CD8-positive, alpha-beta T cell (primary cell): ENCODE measurements at regions of chr19 and their contacts with region 1.

Region 1: DNA sequence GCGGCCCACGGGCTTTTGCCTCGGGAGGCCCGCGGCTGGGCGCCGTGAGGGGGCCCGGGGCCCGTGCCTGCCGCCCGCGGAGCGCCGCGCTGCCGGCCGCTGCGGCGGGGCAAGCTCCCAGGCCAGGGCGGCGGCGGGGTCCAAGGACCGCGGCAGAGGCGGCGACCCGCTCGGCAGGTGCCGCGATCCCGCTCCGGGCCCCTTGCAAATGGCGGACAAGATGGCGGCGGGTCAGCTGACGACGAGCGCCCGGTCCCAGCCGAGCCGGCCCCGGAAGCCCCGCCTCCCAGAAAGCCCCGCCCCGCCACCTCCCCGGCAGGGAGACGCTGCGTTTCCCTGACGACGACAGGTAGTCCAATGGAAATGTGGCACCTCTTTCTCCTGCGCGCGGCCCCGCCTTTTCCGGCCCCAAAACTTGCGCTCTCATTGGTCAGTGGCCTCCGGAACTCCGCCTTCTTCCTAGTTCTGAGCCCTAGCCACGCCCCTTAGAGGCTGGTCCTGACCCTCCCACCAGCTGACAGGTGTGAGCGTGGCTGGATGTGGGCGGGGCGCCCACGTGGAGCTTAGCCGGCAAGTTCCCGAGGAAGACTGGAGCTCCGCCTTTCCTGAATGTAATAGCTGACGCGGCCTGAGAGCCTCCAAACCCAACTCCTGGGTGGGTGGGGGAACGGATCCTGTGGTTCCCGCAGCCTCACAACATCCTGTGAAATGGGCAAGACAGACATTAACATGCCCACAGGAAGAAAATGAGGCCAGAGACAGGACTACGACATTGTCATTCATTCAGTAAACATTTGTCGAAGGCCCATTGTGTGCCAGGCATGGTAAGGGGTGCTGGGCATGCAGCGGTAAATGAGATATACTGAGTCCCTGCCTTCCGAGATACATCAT is at the start of gene AP3D1:
- DNase-seq: peak; percentile 100
- ATAC-seq: peak; percentile 91
- H3K4me3 ChIP-seq: peak within 1 kb of the TSS; percentile 60 to 87
- H3K4me3 Mint-ChIP-seq: peak within 1 kb of the TSS; percentile 85
- H3K27ac ChIP-seq: peak within 1 kb of the TSS; percentile 78 to 79
- H3K27ac Mint-ChIP-seq: peak within 1 kb of the TSS; percentile 90
- H3K4me1 ChIP-seq: peaks cover 36% of the 10 kb centered on the region
- H3K4me1 Mint-ChIP-seq: peaks cover 35% of the 10 kb centered on the region
- H3K27me3 ChIP-seq: no peaks in the 10 kb centered on the region
- H3K27me3 Mint-ChIP-seq: no peaks in the 10 kb centered on the region
- CTCF ChIP-seq: no peak
- total RNA-seq, gene AP3D1: 39.4 to 42.5 TPM

Region 2: DNA sequence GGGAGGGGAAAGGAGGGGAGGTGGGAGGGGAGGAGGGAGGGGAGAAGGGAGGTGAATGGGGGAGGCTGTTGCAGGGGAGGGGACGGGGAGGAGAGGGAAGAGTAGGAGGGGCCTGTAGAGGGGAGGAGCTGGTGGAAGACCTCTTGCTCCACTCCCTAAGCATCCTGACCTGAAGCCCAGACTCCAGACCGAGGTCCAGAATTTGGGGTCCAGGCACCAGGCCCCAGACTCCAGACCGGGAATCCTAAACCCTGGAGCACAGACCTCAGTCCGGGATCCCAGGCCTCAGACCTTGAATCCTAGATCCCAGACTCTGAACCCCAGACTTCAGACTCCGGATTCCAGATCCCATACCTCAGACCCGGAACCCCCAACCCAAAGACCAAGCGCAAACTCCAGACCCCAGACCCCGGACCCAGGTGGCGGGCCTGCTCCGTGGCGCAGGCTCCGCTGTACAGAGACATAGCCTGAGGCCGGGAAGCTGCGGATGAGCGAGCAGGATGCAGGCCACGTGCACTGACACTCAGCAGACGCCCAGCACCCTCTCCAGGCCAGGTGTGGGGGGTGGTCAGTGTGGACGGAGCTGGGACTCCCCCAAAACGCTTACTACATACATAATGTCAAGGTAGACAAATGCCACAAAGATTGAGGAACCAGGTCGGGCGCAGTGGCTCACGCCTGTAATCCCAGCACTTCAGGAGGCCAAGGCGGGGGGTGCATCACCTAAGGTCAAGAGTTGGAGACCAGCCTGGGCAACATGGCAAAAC is 135.4 kb before region 1 on chr19:
- CTCF ChIA-PET with region 1: interaction called, 3 read pairs
- POLR2A ChIA-PET with region 1: interaction called, 6 read pairs
- intact Hi-C with region 1: loop called in 1 of 2 experiments (anchors 1 kb)
- DNase-seq: peak in 8 of 9 experiments; percentile 24 to 82 (median 57)
- ATAC-seq: peak; percentile 50
- H3K4me3 ChIP-seq: no peak overlapping the region
- H3K4me3 Mint-ChIP-seq: peak overlapping the region; percentile 63
- H3K27ac ChIP-seq: no peak overlapping the region
- H3K27ac Mint-ChIP-seq: no peak overlapping the region
- H3K4me1 ChIP-seq: peaks cover 15% of the 10 kb centered on the region
- H3K4me1 Mint-ChIP-seq: peaks cover 27% of the 10 kb centered on the region
- H3K27me3 ChIP-seq: no peaks in the 10 kb centered on the region
- H3K27me3 Mint-ChIP-seq: no peaks in the 10 kb centered on the region
- CTCF ChIP-seq: no peak

Region 3: GRCh38 chr19:2171349-2172145 is 20.0 kb after region 1 on chr19:
- CTCF ChIA-PET with region 1: interaction called, 7 read pairs
- POLR2A ChIA-PET with region 1: no interaction called
- intact Hi-C with region 1: loop called (anchors 1 kb)
- DNase-seq: peak; percentile 51 to 92 (median 72)
- ATAC-seq: peak; percentile 97
- H3K4me3 ChIP-seq: no peak overlapping the region
- H3K4me3 Mint-ChIP-seq: peak overlapping the region; percentile 26
- H3K27ac ChIP-seq: no peak overlapping the region
- H3K27ac Mint-ChIP-seq: peak overlapping the region; percentile 52
- H3K4me1 ChIP-seq: peaks cover 35% of the 10 kb centered on the region
- H3K4me1 Mint-ChIP-seq: peaks cover 43% of the 10 kb centered on the region
- H3K27me3 ChIP-seq: no peaks in the 10 kb centered on the region
- H3K27me3 Mint-ChIP-seq: no peaks in the 10 kb centered on the region
- CTCF ChIP-seq: peak; percentile 51

Region 4: DNA sequence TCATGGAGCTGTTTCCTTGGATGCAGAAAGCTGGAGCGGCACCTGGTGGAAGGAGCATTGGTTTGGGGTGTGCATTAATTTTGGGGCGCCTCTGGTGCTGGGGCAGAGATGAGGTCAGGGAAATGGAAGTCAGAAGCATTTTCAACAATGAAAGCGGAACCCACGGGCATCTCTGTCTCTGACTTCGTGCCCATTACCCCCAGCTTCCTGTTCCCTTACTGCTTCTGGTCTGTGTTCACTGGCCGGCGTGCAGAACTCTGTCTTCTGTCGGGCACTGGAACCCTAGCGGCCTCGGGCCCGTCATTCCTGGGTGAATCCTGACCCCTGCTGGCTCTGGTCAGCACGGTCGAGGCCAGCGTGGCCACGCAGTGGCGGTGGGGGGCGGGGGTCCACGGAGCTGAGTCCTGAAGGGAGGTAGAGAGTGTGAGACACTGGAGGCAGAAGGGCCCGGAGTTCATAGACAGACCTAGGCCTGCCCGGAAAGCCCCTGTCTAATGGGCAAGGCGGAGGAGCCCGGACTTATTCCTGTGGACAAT is 164.3 kb after region 1 on chr19:
- CTCF ChIA-PET with region 1: interaction called, 4 read pairs
- POLR2A ChIA-PET with region 1: no interaction called
- intact Hi-C with region 1: loop called in 1 of 2 experiments (anchors 5 kb)
- DNase-seq: peak in 4 of 9 experiments; percentile 29 to 66 (median 51)
- ATAC-seq: no peak
- H3K4me3 ChIP-seq: no peak overlapping the region
- H3K4me3 Mint-ChIP-seq: no peak overlapping the region
- H3K27ac ChIP-seq: no peak overlapping the region
- H3K27ac Mint-ChIP-seq: no peak overlapping the region
- H3K4me1 ChIP-seq: peaks cover 6% of the 10 kb centered on the region
- H3K4me1 Mint-ChIP-seq: no peaks in the 10 kb centered on the region
- H3K27me3 ChIP-seq: peaks cover 6 to 10% of the 10 kb centered on the region in 2 experiments
- H3K27me3 Mint-ChIP-seq: peaks cover 20% of the 10 kb centered on the region
- CTCF ChIP-seq: no peak

Region 5: DNA sequence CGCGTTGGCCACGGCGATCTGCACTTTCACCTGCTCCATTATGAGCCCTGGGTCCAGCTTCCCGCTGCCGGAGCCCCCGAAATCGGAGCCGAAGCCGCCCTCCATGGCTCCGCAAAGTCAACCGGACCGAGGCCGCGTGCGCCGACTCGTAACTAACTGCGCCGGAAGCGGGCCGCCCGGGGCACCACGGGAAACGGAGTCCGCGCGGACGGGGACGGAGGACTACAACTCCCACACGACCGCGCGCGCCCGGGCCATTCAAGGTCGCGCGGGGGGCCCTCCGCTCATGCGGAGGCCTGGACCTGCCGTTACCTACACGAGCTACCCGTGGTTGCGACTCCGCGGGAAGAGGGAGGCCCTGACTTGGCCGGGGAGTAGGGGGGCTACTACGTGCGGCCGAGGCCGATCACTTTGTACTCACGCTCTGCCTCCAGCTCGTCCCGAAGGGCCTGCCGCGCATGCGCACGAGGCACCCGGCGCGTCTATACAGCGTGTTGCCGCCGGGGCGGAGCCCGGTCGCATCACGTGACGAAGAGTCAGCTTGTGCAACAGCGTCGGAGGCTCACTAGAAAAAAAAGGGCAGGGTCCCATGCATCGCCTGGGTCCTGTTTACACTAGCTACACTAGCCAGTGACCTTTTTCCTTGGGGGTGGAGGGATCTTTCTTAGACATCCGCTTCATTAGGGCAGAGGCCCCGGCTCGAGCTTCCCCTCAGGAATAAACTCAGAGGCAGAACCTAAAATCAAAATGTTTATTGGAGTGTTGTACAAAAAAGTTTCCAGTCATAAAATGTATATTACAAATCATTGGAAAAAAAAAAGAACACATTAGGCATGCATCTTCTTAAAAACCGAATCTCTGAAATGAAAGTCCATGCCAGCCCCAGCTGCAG is 276.1 kb after region 1 on chr19 and contains the start of gene TIMM13:
- CTCF ChIA-PET with region 1: no interaction called
- POLR2A ChIA-PET with region 1: no interaction called
- intact Hi-C with region 1: loop called (anchors 1 kb)
- DNase-seq: peak; percentile 91 to 98 (median 96)
- ATAC-seq: peak; percentile 94
- H3K4me3 ChIP-seq: peak within 1 kb of the TSS; percentile 92 to 98
- H3K4me3 Mint-ChIP-seq: peak within 1 kb of the TSS; percentile 95
- H3K27ac ChIP-seq: peak within 1 kb of the TSS; percentile 96 to 99
- H3K27ac Mint-ChIP-seq: peak within 1 kb of the TSS; percentile 98
- H3K4me1 ChIP-seq: peaks cover 19% of the 10 kb centered on the region
- H3K4me1 Mint-ChIP-seq: peaks cover 13% of the 10 kb centered on the region
- H3K27me3 ChIP-seq: no peaks in the 10 kb centered on the region
- H3K27me3 Mint-ChIP-seq: no peaks in the 10 kb centered on the region
- CTCF ChIP-seq: no peak
- total RNA-seq, gene TIMM13: 21.5 to 24.4 TPM

Region 6: DNA sequence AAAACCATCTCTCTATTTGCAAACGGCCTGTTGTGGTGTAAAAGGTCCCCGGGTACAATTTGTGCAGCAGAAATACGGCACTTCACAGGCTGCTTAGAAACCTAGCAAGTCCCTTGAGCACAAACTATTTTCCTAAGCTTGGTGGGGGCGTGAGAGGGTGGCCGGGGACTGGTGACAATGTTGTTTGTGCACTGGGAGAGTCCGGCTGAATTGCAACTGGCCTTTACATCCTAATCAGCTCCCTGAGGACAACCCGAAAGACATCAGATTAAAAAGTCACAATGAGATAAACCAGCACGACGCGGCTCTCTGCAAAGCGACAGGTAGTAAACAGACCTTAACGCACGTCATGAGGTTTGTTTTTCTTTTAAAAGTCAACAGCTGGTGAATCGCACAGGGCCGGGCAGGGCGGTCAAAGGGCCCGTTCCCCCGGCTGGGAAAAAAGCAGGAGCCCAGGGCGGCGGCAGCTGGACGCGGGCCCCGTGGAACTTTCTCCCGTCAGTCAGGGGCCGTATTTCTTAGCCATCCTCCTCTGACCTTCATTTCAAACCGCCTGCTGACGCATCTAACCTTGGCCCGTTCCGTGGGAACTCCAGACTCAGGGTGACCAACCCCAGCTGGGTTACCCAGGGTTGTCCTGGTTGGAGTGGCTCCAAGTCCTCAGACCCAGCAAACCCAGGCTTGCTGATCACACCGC is 436.6 kb after region 1 on chr19:
- CTCF ChIA-PET with region 1: no interaction called
- POLR2A ChIA-PET with region 1: no interaction called
- intact Hi-C with region 1: no loop called
- DNase-seq: no peak
- ATAC-seq: no peak
- H3K4me3 ChIP-seq: no peak overlapping the region
- H3K4me3 Mint-ChIP-seq: no peak overlapping the region
- H3K27ac ChIP-seq: no peak overlapping the region
- H3K27ac Mint-ChIP-seq: no peak overlapping the region
- H3K4me1 ChIP-seq: no peaks in the 10 kb centered on the region
- H3K4me1 Mint-ChIP-seq: no peaks in the 10 kb centered on the region
- H3K27me3 ChIP-seq: peaks cover 0 to 3% of the 10 kb centered on the region in 2 experiments
- H3K27me3 Mint-ChIP-seq: no peaks in the 10 kb centered on the region
- CTCF ChIP-seq: no peak

Region 7: DNA sequence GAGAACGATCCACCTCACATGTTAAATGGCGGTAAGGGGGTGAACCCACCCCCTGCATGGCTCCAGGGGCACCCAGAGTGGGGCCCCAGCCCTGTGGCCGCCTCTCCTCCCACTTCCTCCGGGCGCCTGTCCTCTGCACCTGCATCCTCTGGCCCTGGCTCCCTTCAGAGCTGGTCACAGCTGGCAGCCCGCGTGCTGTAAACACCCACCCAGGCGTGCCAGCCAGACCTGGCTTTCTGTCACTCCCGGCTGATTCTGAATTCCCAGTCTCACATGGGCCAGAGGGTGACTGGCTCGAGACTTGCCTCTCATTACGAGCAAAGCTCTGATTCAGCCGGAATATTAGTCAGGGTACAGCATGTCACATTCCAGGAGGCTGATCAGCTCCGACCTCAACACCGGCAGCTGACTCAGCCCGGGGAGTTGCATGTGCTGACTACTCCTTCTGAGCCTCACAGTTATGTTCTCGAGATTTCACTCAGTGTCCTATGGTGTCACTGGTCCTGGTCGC is 475.8 kb after region 1 on chr19:
- CTCF ChIA-PET with region 1: no interaction called
- POLR2A ChIA-PET with region 1: no interaction called
- intact Hi-C with region 1: loop called (anchors 5 to 10 kb)
- DNase-seq: peak in 2 of 9 experiments; percentile 28 to 45
- ATAC-seq: peak; percentile 35
- H3K4me3 ChIP-seq: no peak overlapping the region
- H3K4me3 Mint-ChIP-seq: no peak overlapping the region
- H3K27ac ChIP-seq: no peak overlapping the region
- H3K27ac Mint-ChIP-seq: peak overlapping the region; percentile 55
- H3K4me1 ChIP-seq: peaks cover 28% of the 10 kb centered on the region
- H3K4me1 Mint-ChIP-seq: peaks cover 46% of the 10 kb centered on the region
- H3K27me3 ChIP-seq: no peaks in the 10 kb centered on the region
- H3K27me3 Mint-ChIP-seq: no peaks in the 10 kb centered on the region
- CTCF ChIP-seq: no peak